ENCODE measurements at regions of chr2 and their contacts with region 1.

Region 1: GRCh38 chr2:241877989-241878970 is 8.8 kb downstream of the RTP5 start:
- DNase-seq: peak; percentile 45 to 86 (median 73)
- ATAC-seq: no peak
- H3K4me3 ChIP-seq: no peak overlapping the region
- H3K4me3 Mint-ChIP-seq: no peak overlapping the region
- H3K27ac ChIP-seq: no peak overlapping the region
- H3K27ac Mint-ChIP-seq: no peak overlapping the region
- H3K4me1 ChIP-seq: peaks cover 20% of the 10 kb centered on the region
- H3K4me1 Mint-ChIP-seq: peaks cover 25% of the 10 kb centered on the region
- H3K27me3 ChIP-seq: no peaks in the 10 kb centered on the region
- H3K27me3 Mint-ChIP-seq: no peaks in the 10 kb centered on the region
- CTCF ChIP-seq: peak; percentile 56

Region 2: GRCh38 chr2:240434728-240435456 is 1443.4 kb before region 1 on chr2:
- CTCF ChIA-PET with region 1: no interaction called
- POLR2A ChIA-PET with region 1: no interaction called
- intact Hi-C with region 1: loop called in 1 of 2 experiments (anchors 5 kb)
- DNase-seq: peak; percentile 67 to 91 (median 90)
- ATAC-seq: peak; percentile 86
- H3K4me3 ChIP-seq: peak overlapping the region; percentile 50 to 65
- H3K4me3 Mint-ChIP-seq: peak overlapping the region; percentile 85
- H3K27ac ChIP-seq: no peak overlapping the region
- H3K27ac Mint-ChIP-seq: no peak overlapping the region
- H3K4me1 ChIP-seq: peaks cover 10% of the 10 kb centered on the region
- H3K4me1 Mint-ChIP-seq: peaks cover 6% of the 10 kb centered on the region
- H3K27me3 ChIP-seq: peaks cover 15 to 17% of the 10 kb centered on the region in 2 experiments
- H3K27me3 Mint-ChIP-seq: peaks cover 18% of the 10 kb centered on the region
- CTCF ChIP-seq: no peak

Region 3: DNA sequence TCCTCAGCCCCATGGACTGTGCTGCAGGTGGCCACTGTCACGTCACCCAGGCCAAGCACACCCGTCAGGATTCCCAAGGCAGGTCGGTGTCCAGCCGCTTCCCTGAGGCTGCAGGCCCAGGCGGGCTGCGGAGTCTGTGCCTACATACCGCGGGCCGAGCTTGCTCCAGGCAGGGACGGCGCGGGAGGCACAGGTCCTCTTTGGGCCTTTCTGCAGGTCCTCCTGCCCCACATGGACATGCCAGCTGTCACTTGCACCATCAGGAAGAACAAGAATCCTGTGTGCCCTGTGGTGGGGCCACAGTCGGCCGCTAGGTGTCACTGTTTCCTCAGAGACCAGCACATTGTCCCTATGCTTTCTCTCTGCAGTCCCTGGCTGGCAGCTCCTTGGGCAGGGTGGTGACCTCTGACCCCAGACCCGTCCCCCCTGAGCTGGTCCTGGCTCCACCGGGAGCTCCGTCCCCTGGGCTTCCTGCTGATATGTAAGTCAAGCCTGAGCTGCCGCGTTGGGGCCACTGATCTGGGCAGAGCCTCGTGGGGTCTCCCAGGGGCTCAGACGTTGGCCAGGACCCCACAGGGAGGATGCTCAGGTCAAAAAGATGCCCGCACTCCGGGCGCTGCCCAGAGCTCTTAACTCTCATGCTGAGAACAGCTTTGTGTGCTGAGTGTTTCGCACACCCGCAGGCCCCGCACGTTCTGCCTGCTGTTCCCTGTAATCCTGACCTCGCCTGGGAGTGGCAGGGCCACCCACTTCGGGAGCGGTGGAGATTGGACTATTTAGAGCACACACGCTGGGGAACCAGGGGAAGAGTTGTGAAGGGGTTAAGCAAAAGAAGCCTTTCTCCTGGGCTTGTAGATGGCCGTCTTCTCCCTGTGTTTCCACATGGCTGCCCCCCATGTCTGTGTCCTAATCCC is 1026.9 kb before region 1 on chr2:
- CTCF ChIA-PET with region 1: interaction called, 9 read pairs
- POLR2A ChIA-PET with region 1: no interaction called
- intact Hi-C with region 1: loop called (anchors 1 to 5 kb)
- DNase-seq: peak; percentile 73 to 91 (median 81)
- ATAC-seq: peak; percentile 95
- H3K4me3 ChIP-seq: no peak overlapping the region
- H3K4me3 Mint-ChIP-seq: no peak overlapping the region
- H3K27ac ChIP-seq: no peak overlapping the region
- H3K27ac Mint-ChIP-seq: no peak overlapping the region
- H3K4me1 ChIP-seq: no peaks in the 10 kb centered on the region
- H3K4me1 Mint-ChIP-seq: no peaks in the 10 kb centered on the region
- H3K27me3 ChIP-seq: peaks cover 0 to 2% of the 10 kb centered on the region in 2 experiments
- H3K27me3 Mint-ChIP-seq: peaks cover 4% of the 10 kb centered on the region
- CTCF ChIP-seq: peak; percentile 91

Region 4: DNA sequence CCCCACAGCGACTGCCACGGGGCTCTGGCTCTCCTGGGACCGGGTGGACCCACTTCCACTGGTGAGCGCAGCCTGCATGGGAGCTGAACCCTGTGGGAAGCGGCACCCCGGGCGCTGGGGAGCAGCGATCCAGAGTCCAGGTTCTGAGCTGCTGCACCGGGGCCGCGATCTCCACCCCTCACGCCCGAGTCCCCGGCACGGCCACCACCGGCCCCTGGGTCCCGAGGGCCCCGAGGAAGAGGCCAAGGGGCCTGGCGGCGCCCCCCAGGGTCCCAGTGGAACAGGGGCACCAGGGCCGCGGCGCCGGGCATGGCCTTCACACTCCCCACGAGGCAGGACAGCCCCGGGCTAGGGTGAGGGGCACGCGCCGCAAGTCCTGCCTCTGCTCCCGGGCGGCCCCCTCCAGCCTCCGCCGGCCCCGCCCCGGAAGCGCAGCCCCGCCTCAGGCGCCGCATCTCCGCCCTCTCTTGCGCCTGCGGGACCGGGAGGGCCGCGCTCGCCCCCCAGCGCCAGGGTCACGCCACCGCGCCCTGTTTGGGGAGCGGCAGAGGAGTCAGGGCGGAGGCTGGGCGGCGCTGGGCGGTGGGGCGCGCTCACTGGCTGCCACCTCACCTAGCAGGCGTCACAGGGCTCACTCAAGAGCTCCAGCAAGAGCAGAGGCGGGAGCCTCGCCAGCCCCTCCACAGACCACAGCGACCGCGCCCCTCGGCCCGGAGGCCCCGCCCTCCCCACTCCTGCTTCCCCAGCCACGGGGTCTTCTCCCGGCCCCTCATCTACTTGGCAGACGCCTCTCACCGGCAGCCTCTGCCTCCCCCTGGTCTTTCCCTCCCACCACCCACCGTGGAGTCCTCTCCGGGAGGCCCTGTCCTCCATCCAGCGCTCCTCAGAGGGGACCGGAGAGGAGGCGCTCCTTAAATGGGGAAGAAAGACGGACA is 268.2 kb before region 1 on chr2:
- CTCF ChIA-PET with region 1: interaction called, 3 read pairs
- POLR2A ChIA-PET with region 1: no interaction called
- intact Hi-C with region 1: loop called in 1 of 2 experiments (anchors 2 kb)
- DNase-seq: peak; percentile 81 to 96 (median 92)
- ATAC-seq: peak; percentile 99
- H3K4me3 ChIP-seq: peak overlapping the region; percentile 53 to 59
- H3K4me3 Mint-ChIP-seq: peak overlapping the region; percentile 63
- H3K27ac ChIP-seq: peak overlapping the region; percentile 51 to 77
- H3K27ac Mint-ChIP-seq: peak overlapping the region; percentile 72
- H3K4me1 ChIP-seq: peaks cover 23% of the 10 kb centered on the region
- H3K4me1 Mint-ChIP-seq: peaks cover 26% of the 10 kb centered on the region
- H3K27me3 ChIP-seq: no peaks in the 10 kb centered on the region
- H3K27me3 Mint-ChIP-seq: no peaks in the 10 kb centered on the region
- CTCF ChIP-seq: peak; percentile 63

Region 5: GRCh38 chr2:241686649-241687425 is 191.4 kb before region 1 on chr2 and contains the start of gene DTYMK:
- CTCF ChIA-PET with region 1: no interaction called
- POLR2A ChIA-PET with region 1: interaction called, 3 read pairs
- intact Hi-C with region 1: loop called (anchors 1 kb)
- DNase-seq: peak; percentile 89 to 98 (median 95)
- ATAC-seq: peak; percentile 95
- H3K4me3 ChIP-seq: peak within 1 kb of the TSS; percentile 87 to 98
- H3K4me3 Mint-ChIP-seq: peak within 1 kb of the TSS; percentile 90
- H3K27ac ChIP-seq: peak within 1 kb of the TSS; percentile 74 to 81
- H3K27ac Mint-ChIP-seq: peak within 1 kb of the TSS; percentile 91
- H3K4me1 ChIP-seq: peaks cover 21% of the 10 kb centered on the region
- H3K4me1 Mint-ChIP-seq: peaks cover 24% of the 10 kb centered on the region
- H3K27me3 ChIP-seq: no peaks in the 10 kb centered on the region
- H3K27me3 Mint-ChIP-seq: no peaks in the 10 kb centered on the region
- CTCF ChIP-seq: no peak
- total RNA-seq, gene DTYMK: 3.7 to 6.0 TPM

Region 6: DNA sequence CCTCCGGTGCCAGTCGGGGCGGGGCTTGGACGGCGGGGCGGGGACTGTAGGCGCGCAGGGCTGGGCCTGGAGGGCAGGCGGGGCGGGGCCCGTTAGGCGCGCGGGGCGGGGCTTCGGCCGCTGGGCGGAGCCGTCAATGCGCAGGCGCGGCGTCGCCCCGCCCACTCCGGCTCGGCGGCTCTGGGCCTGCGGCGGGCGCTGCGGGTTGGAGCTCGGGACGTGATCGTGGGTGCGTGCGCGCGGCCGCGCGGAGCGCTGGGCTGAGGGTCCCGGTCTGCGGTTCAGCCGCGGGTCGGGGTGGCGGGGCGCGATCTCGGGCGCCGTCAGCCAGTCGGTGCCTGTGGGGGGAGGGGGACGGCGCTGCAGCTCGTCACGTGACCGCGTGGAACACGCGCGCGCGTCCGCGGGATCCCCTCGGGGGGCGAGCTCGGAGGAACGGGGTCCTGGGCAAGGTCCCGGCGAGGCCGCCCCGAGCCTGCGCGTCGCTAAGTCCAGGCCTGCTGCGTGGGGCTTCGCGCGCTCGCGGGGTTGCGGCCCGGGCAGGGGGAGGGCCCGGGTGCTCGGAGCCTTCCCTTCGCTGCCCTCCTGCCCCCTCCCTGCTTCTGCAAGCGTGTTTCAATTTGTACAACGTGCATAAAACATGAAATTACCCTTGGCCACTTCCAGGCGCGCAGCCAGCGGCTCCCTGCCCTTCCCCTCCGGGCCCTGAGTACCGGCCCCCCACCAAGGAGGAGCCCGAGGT is 143.6 kb before region 1 on chr2 and contains the start of gene D2HGDH:
- CTCF ChIA-PET with region 1: interaction called, 8 read pairs
- POLR2A ChIA-PET with region 1: interaction called, 6 read pairs
- intact Hi-C with region 1: loop called (anchors 1 kb)
- DNase-seq: peak; percentile 84 to 97 (median 94)
- ATAC-seq: peak; percentile 92
- H3K4me3 ChIP-seq: peak within 1 kb of the TSS; percentile 68 to 70
- H3K4me3 Mint-ChIP-seq: peak within 1 kb of the TSS; percentile 86
- H3K27ac ChIP-seq: peak within 1 kb of the TSS; percentile 26 to 65
- H3K27ac Mint-ChIP-seq: peak within 1 kb of the TSS; percentile 85
- H3K4me1 ChIP-seq: peaks cover 22% of the 10 kb centered on the region
- H3K4me1 Mint-ChIP-seq: peaks cover 25% of the 10 kb centered on the region
- H3K27me3 ChIP-seq: no peaks in the 10 kb centered on the region
- H3K27me3 Mint-ChIP-seq: no peaks in the 10 kb centered on the region
- CTCF ChIP-seq: no peak
- total RNA-seq, gene D2HGDH: 41.6 to 46.4 TPM

Region 7: DNA sequence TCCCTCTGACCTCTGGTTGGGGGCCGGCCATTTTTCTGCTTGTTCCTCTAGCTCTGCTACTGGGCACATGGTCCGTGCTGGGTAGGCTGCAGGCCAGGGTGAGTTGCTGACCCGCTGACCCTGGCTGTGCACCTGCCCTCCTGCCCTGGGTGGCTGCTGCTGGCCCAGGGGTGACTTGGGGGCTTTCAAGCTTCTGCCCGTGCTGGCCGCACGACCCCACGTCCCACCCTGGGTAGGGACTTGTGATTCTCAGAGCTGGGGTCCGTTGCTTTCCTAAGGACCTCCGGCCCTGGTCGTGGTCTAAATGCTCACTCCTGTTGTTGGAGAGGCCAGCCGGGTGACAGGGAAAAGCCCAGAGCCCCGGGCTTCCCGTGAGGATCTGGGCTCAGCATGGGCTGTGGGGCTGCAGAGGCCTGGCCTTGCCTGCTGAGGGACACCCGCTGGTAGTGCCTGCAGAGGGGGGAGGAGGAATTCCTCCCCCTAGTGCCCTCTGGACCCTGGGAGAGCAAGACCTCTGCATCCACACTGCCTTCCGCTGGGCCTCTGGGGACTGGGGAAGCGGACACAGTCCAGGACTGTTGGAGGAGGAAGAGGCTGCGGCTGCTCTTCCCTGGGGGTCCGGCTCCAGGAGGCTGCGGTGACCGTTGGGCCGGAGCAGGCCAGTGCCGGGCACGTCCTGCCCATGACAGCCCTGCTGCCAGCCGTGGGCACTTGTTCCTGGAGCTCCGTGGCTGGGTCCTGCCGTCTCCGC is 107.9 kb before region 1 on chr2:
- CTCF ChIA-PET with region 1: no interaction called
- POLR2A ChIA-PET with region 1: no interaction called
- intact Hi-C with region 1: no loop called
- DNase-seq: no peak
- ATAC-seq: no peak
- H3K4me3 ChIP-seq: no peak overlapping the region
- H3K4me3 Mint-ChIP-seq: no peak overlapping the region
- H3K27ac ChIP-seq: no peak overlapping the region
- H3K27ac Mint-ChIP-seq: no peak overlapping the region
- H3K4me1 ChIP-seq: peaks cover 9% of the 10 kb centered on the region
- H3K4me1 Mint-ChIP-seq: peaks cover 12% of the 10 kb centered on the region
- H3K27me3 ChIP-seq: no peaks in the 10 kb centered on the region
- H3K27me3 Mint-ChIP-seq: no peaks in the 10 kb centered on the region
- CTCF ChIP-seq: no peak

Region 8: GRCh38 chr2:241865957-241866789 is 12.1 kb before region 1 on chr2:
- CTCF ChIA-PET with region 1: interaction called, 40 read pairs
- POLR2A ChIA-PET with region 1: interaction called, 17 read pairs
- intact Hi-C with region 1: no loop called
- DNase-seq: peak in 3 of 9 experiments; percentile 24 to 50 (median 46)
- ATAC-seq: no peak
- H3K4me3 ChIP-seq: no peak overlapping the region
- H3K4me3 Mint-ChIP-seq: no peak overlapping the region
- H3K27ac ChIP-seq: peak overlapping the region in 1 of 2 experiments; percentile 62
- H3K27ac Mint-ChIP-seq: peak overlapping the region; percentile 46
- H3K4me1 ChIP-seq: peaks cover 81% of the 10 kb centered on the region
- H3K4me1 Mint-ChIP-seq: peaks cover 72% of the 10 kb centered on the region
- H3K27me3 ChIP-seq: peaks cover 0 to 30% of the 10 kb centered on the region in 2 experiments
- H3K27me3 Mint-ChIP-seq: peaks cover 28% of the 10 kb centered on the region
- CTCF ChIP-seq: no peak

Region 9: GRCh38 chr2:241914542-241914941 is 36.3 kb after region 1 on chr2:
- CTCF ChIA-PET with region 1: no interaction called
- POLR2A ChIA-PET with region 1: no interaction called
- intact Hi-C with region 1: no loop called
- DNase-seq: no peak
- ATAC-seq: no peak
- H3K4me3 ChIP-seq: no peak overlapping the region
- H3K4me3 Mint-ChIP-seq: no peak overlapping the region
- H3K27ac ChIP-seq: no peak overlapping the region
- H3K27ac Mint-ChIP-seq: no peak overlapping the region
- H3K4me1 ChIP-seq: no peaks in the 10 kb centered on the region
- H3K4me1 Mint-ChIP-seq: no peaks in the 10 kb centered on the region
- H3K27me3 ChIP-seq: no peaks in the 10 kb centered on the region
- H3K27me3 Mint-ChIP-seq: no peaks in the 10 kb centered on the region
- CTCF ChIP-seq: no peak